Activated CD4-positive, alpha-beta memory T cell treated with anti-CD3 and anti-CD28 coated beads, Interleukin-2, amount 10 ng/mL, durations not matched to agents 7 days and 5 days (primary cell): ENCODE measurements at regions of chr12 and their contacts with region 1.

Region 1: GRCh38 chr12:26832822-26833742 is at the start of gene ITPR2:
- DNase-seq: peak; percentile 93
- H3K4me3 Mint-ChIP-seq: peak within 1 kb of the TSS; percentile 92
- H3K27ac Mint-ChIP-seq: peak within 1 kb of the TSS; percentile 94
- H3K4me1 Mint-ChIP-seq: peaks cover 37% of the 10 kb centered on the region
- H3K27me3 Mint-ChIP-seq: no peaks in the 10 kb centered on the region
- total RNA-seq, gene ITPR2: 31.7 to 36.3 TPM

Region 2: GRCh38 chr12:26821212-26821701 is 11.8 kb before region 1 on chr12:
- CTCF ChIA-PET with region 1: interaction called, 15 read pairs
- POLR2A ChIA-PET with region 1: interaction called, 14 read pairs
- DNase-seq: no peak
- H3K4me3 Mint-ChIP-seq: no peak overlapping the region
- H3K27ac Mint-ChIP-seq: no peak overlapping the region
- H3K4me1 Mint-ChIP-seq: no peaks in the 10 kb centered on the region
- H3K27me3 Mint-ChIP-seq: no peaks in the 10 kb centered on the region

Region 3: DNA sequence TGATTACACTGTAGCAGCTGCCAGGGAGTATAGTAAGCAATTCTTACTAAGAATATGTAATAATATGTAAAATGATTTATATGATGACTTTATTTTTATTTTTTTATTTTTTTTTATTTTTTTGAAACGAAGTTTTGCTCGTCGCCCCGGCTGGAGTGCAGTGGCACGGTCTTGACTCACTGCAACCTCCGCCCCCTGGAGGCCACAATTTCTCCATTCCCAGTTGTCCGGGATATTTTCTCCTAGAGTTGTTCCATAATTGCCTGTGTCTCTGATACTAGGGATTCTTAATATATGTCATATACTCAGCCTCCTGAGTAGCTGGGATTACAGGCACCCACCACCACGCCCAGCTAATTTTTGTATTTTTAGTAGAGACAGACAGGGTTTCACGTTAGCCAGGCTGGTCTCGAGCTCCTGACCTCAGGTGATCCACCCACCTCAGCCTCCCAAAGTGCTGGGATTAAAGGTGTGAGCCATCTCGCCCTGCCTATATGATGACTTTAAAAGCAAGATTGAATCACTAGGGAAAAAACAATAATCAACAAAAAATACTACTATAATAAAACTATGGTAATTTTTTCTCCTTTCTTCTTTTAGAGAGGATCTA is 12.1 kb after region 1 on chr12:
- CTCF ChIA-PET with region 1: interaction called, 11 read pairs
- POLR2A ChIA-PET with region 1: interaction called, 11 read pairs
- DNase-seq: no peak
- H3K4me3 Mint-ChIP-seq: no peak overlapping the region
- H3K27ac Mint-ChIP-seq: no peak overlapping the region
- H3K4me1 Mint-ChIP-seq: peaks cover 7% of the 10 kb centered on the region
- H3K27me3 Mint-ChIP-seq: peaks cover 18% of the 10 kb centered on the region

Region 4: GRCh38 chr12:26937875-26938700 is 105.0 kb after region 1 on chr12 and contains the starts of genes FGFR1OP2 and INTS13:
- CTCF ChIA-PET with region 1: no interaction called
- POLR2A ChIA-PET with region 1: interaction called, 19 read pairs
- DNase-seq: peak; percentile 98
- H3K4me3 Mint-ChIP-seq: peak within 1 kb of the TSS; percentile 94
- H3K27ac Mint-ChIP-seq: peak within 1 kb of the TSS; percentile 97
- H3K4me1 Mint-ChIP-seq: peaks cover 52% of the 10 kb centered on the region
- H3K27me3 Mint-ChIP-seq: no peaks in the 10 kb centered on the region
- total RNA-seq, gene FGFR1OP2: 85.7 to 87.5 TPM
- total RNA-seq, gene INTS13: 44.8 to 45.8 TPM

Region 5: GRCh38 chr12:27014085-27014858 is 181.2 kb after region 1 on chr12 and contains the start of gene TM7SF3:
- CTCF ChIA-PET with region 1: interaction called, 20 read pairs
- POLR2A ChIA-PET with region 1: interaction called, 24 read pairs
- DNase-seq: peak; percentile 96
- H3K4me3 Mint-ChIP-seq: peak within 1 kb of the TSS; percentile 90
- H3K27ac Mint-ChIP-seq: peak within 1 kb of the TSS; percentile 95
- H3K4me1 Mint-ChIP-seq: peaks cover 60% of the 10 kb centered on the region
- H3K27me3 Mint-ChIP-seq: no peaks in the 10 kb centered on the region
- total RNA-seq, gene TM7SF3: 33.6 to 35.7 TPM

Region 6: DNA sequence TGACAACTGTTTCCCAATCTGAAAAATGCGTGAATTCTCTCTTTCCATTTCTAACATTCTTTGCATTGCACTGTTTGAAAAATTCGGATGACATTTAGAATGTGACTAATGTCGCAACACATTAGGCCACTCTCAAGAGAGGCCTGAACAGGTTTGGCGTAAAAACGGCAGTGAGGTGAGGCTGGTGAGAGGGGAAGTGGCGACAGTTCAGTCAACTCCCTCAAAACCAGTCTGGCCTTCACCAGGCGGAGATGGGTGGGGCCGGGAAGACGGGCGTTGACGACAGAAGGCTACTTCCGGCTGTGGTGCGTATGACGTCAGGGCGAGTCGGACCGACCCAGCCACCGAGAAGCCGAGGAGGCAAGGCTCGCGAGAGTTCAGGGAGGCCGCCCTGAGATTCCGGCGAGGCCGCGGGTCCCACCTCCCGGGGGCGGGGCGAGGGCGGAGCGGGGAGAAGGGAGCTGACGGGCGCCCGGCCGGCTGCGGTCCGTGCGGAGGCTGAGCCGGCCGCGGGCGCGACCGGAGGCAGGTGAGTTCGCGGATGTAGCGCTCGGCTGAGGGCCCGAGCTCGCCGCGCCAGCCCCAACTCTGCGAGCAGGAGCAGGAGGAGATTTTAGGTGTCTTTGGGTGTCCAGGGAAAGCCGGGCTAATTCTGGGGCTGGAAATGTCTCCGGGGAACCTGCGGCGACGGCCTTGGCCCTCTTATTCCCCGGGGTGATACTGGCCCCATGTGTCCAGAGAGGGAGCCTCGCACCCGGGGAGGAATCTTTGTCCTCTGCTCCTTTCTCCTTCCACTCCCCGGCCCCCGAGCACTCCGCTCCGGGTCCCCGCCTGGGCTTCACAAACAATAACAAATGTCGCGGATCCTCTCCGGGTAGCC is 411.0 kb after region 1 on chr12 and contains the start of gene STK38L:
- CTCF ChIA-PET with region 1: no interaction called
- POLR2A ChIA-PET with region 1: interaction called, 10 read pairs
- DNase-seq: peak; percentile 98
- H3K4me3 Mint-ChIP-seq: peak within 1 kb of the TSS; percentile 99
- H3K27ac Mint-ChIP-seq: peak within 1 kb of the TSS; percentile 91
- H3K4me1 Mint-ChIP-seq: peaks cover 38% of the 10 kb centered on the region
- H3K27me3 Mint-ChIP-seq: no peaks in the 10 kb centered on the region
- total RNA-seq, gene STK38L: 19.1 to 25.8 TPM